Transverse colon (tissue), 4 donors: ENCODE measurements at regions of chr11 and their contacts with region 1.

Region 1: GRCh38 chr11:11265994-11266606 is 87.0 kb downstream of the CSNK2A3 start:
- DNase-seq: peak; percentile 60
- H3K4me3 ChIP-seq: no peak overlapping the region
- H3K27ac ChIP-seq: no peak overlapping the region
- H3K4me1 ChIP-seq: no peaks in the 10 kb centered on the region
- H3K27me3 ChIP-seq: no peaks in the 10 kb centered on the region
- CTCF ChIP-seq: peak; percentile 68 to 83 (median 72)
- EP300 ChIP-seq: no peak
- POLR2A ChIP-seq: no peak

Region 2: GRCh38 chr11:10792398-10792975 is 473.6 kb before region 1 on chr11:
- in situ Hi-C with region 1: loop called in 1 of 4 experiments (anchors 10 kb)
- intact Hi-C with region 1: no loop called
- DNase-seq: peak; percentile 91
- H3K4me3 ChIP-seq: no peak overlapping the region
- H3K27ac ChIP-seq: no peak overlapping the region
- H3K4me1 ChIP-seq: peaks cover 0 to 9% (median 3%) of the 10 kb centered on the region in 4 donors
- H3K27me3 ChIP-seq: no peaks in the 10 kb centered on the region
- CTCF ChIP-seq: peak; percentile 85 to 96 (median 89)
- EP300 ChIP-seq: no peak
- POLR2A ChIP-seq: no peak

Region 3: GRCh38 chr11:11028017-11028692 is 237.9 kb before region 1 on chr11:
- in situ Hi-C with region 1: loop called in 2 of 4 experiments (anchors 25 kb)
- intact Hi-C with region 1: no loop called
- DNase-seq: peak; percentile 77
- H3K4me3 ChIP-seq: no peak overlapping the region
- H3K27ac ChIP-seq: no peak overlapping the region
- H3K4me1 ChIP-seq: no peaks in the 10 kb centered on the region
- H3K27me3 ChIP-seq: no peaks in the 10 kb centered on the region
- CTCF ChIP-seq: peak; percentile 79 to 83 (median 79)
- EP300 ChIP-seq: no peak
- POLR2A ChIP-seq: no peak

Region 4: DNA sequence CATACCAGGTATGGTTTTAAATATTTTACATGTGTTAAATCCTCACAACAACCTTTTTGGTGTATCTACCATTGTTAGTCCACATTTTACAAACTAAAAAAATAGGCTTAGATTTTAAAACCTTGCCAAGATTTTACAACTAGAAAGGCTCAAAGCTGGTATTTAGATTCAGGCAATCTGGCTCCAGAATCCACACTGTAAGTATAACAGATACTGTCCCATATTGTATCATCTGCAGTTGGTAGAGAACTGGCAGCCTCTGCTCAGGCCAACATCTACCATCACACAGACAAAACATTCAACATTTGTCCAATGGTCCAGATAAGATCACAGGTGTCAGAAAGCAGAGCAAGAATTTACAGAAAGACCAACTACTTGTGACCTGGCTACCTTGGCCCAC is 56.0 kb after region 1 on chr11:
- in situ Hi-C with region 1: no loop called
- intact Hi-C with region 1: loop called (anchors 2 kb)
- DNase-seq: no peak
- H3K4me3 ChIP-seq: no peak overlapping the region
- H3K27ac ChIP-seq: no peak overlapping the region
- H3K4me1 ChIP-seq: no peaks in the 10 kb centered on the region
- H3K27me3 ChIP-seq: no peaks in the 10 kb centered on the region
- CTCF ChIP-seq: no peak
- EP300 ChIP-seq: no peak
- POLR2A ChIP-seq: no peak